ENCODE measurements at regions of chr2 and their contacts with region 1.

Region 1: DNA sequence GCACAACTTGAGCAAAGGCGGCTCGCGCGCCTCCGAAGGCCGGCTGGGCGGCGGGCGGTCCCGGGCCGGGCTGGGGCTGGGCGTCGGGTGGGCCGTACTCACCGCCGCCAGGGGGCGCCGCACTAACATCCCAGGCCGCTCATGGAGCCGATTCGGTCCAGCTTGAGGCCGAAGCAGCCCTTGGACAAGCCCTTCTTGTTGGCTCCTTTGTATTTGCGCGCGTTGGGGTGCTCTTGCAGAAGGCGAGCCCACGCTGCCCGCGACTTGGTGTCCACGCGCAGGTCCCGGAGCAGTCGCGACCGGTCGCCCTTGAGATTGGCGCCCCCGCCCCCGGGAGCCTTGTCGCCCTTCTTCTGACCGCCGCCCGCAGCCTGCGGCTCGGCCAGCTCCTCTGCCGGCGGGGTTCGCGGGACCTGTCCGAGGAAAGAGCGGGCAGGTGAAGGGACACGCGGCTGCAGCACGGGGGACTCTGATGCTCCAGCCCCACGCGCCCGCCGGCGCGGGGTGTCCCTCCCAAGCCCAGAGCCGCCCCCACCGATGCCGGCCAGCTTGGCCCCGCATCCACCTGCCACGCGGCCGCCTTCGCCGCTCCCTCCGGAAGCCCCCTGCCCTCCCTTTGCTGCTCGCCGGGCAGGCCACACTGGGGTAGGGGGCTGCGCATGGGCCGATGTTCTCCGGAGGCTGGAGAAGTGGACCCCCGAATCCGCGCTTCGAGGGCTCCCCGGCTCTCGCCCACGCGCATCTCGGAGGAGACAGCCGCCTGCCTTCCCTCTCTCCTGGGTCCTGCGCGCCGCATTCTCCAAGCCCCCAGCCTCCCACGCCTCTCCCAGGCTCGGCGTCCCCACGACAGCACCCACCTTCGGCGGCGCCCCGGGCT is 655 bp downstream of the NPPC start:
- DNase-seq: peak; percentile 76 to 84
- H3K4me3 ChIP-seq: peak overlapping the region; percentile 27 to 44
- H3K27ac ChIP-seq: no peak overlapping the region
- H3K4me1 ChIP-seq: peaks cover 0 to 26% (median 21%) of the 10 kb centered on the region in 4 donors
- H3K27me3 ChIP-seq: peaks cover 0 to 85% of the 10 kb centered on the region in 2 donors
- CTCF ChIP-seq: peak; percentile 82 to 87

Region 2: DNA sequence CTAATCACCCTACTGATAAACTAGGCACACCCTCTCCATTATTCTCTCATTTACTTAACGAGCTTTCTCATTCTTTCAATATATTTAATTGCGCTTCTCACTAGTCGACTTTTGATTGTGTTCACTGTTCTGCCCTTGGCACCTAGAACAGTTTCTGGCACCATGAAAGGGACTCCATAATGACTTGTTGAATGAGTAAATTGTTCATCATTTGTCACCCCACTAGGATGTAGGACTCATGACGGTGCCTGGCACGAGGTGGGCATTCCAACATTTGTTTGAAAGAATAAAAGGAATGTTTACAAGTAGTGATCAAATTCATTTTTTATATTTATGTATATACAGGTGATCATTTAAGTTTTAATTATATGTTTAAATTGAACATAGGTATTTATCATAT is 159.6 kb after region 1 on chr2:
- intact Hi-C with region 1: no loop called
- DNase-seq: no peak
- H3K4me3 ChIP-seq: no peak overlapping the region
- H3K27ac ChIP-seq: no peak overlapping the region
- H3K4me1 ChIP-seq: no peaks in the 10 kb centered on the region
- H3K27me3 ChIP-seq: no peaks in the 10 kb centered on the region
- CTCF ChIP-seq: no peak

Region 3: DNA sequence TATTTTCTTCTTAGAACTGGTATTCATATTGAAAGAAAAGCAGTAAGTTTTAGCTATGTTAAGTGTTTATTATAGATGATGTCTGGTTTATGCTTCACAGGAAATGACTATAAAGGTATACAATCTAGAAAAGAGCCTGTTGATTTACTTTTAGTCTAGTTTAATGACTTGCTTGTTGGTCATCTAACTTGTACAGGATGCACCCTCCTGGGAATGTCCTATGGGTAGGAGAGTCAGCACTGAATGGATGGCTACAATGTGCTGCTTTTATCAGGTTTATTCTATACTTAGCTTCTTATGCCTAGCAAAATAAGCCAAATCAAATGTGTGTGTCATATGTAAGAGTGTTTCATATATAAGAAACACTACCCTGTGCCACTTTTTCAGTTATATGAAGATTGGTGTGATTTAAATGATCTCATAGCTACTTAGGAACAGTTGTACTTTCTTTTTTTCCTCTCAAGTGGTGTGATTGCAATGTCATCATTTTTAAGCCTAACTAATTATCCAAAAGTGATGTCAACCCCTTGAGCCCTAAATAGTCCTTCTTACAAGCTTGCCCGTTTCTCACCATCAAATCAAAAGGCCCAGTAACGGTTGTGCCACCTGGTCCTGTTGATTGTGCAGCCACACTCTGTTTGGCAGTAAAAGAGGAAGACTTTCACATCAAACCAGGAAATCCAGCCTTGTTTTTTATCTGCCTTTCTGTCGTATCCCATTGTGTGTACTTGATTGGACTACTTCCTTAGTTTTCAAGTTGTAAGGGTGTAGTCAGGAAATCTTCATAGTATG is 212.0 kb after region 1 on chr2:
- intact Hi-C with region 1: loop called (anchors 5 kb)
- DNase-seq: no peak
- H3K4me3 ChIP-seq: no peak overlapping the region
- H3K27ac ChIP-seq: no peak overlapping the region
- H3K4me1 ChIP-seq: no peaks in the 10 kb centered on the region
- H3K27me3 ChIP-seq: no peaks in the 10 kb centered on the region
- CTCF ChIP-seq: no peak

Region 4: DNA sequence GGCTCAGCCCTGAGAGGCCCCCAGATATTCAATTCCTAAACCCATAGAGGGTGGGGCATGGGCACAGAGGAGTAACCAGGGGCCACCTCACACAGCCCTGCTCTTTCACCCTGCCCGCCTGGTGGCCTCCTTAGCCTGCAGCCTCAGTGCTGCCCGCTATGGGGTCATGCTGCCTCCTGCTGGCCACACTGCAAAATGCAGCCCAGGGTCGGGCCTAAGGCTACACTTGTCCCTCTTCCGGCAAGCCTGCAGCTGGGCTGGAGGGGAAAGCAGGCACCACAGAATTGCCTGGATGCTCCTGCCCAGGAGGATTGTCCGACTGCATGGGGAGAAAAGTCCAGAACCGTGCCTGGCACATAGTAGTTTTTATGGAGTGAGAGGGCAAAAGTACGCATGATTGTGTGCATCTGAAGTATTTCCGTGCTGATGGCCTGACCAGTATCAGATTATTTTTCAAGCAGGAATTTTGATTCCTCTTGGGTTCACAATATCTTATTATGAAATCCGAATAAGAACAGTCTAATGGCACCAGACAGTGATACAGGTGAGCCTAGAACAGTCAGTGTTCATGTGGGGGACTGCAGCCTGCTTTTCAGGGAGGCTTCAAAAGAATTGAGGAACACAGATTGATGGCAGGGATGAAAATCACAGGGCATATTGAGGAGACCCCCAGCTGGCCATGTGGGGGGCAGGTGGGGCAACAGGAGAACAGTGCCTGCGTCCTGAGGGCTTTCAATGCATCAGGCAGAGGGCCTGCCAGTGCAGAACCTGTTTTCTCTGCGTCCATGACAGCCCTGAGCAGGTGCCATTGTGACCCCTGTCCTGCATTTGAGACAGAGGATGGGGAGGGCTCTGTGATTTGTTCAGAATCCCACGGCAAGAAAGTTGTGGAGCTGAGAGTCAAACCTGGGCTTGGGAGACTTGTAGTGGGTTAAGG is 401.8 kb after region 1 on chr2:
- intact Hi-C with region 1: loop called (anchors 2 kb)
- DNase-seq: peak; percentile 48 to 69
- H3K4me3 ChIP-seq: no peak overlapping the region
- H3K27ac ChIP-seq: no peak overlapping the region
- H3K4me1 ChIP-seq: no peaks in the 10 kb centered on the region
- H3K27me3 ChIP-seq: no peaks in the 10 kb centered on the region
- CTCF ChIP-seq: peak; percentile 57 to 69

Region 5: DNA sequence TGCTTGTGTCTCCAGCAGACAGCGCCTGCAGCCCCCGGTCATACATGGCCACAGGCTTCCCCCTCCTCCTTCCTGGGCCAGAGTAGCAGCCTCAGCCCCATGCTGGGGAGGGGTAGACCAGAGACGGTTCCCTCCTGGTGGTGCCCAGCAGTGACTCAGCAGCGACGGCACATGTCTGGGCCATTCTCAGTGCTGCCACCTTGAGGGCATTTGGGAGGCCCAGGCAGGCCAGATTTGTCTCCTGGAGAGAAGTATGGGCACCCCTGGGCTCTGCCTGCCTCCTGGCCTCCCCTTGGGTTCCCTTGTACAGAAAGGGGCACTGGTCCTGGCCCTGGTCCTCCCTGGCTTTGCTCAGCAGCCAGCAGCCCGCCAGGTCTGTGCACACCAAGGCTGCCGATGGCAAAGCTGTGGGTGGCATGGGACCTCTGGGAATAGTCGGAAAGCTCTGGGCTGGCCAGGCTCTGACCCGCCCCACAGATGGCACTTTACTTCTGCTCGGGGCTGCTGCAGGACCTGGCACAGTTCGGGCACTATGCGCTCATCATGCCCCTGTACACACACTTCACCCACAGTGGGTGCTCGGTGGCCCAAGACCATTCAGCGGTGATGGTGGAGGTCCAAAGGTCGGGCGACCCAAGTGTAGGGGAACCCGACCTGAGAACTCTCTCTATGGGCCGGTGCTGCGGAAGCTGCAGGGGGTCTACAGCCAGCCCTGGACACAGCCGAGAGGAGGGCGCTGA is 519.0 kb after region 1 on chr2:
- intact Hi-C with region 1: loop called (anchors 5 kb)
- DNase-seq: peak in 1 of 2 donors; percentile 60
- H3K4me3 ChIP-seq: no peak overlapping the region
- H3K27ac ChIP-seq: no peak overlapping the region
- H3K4me1 ChIP-seq: peaks cover 0 to 5% (median 0%) of the 10 kb centered on the region in 4 donors
- H3K27me3 ChIP-seq: peaks cover 0 to 22% of the 10 kb centered on the region in 2 donors
- CTCF ChIP-seq: peak in 1 of 2 experiments; percentile 16

Measured in tibial artery (tissue), 4 donors.